ENCODE measurements at regions of chr9 and their contacts with region 1.

Region 1: GRCh38 chr9:21434202-21435014 is 5.8 kb upstream of the IFNA1 start:
- DNase-seq: peak; percentile 63
- ATAC-seq: peak; percentile 79
- H3K4me3 ChIP-seq: no peak overlapping the region
- H3K27ac ChIP-seq: no peak overlapping the region
- H3K4me1 ChIP-seq: no peaks in the 10 kb centered on the region
- H3K27me3 ChIP-seq: no peaks in the 10 kb centered on the region
- CTCF ChIP-seq: peak; percentile 58 to 71 (median 66); a peak in 5 of 6 replicates
- POLR2A ChIP-seq: no peak
- RAD21 ChIP-seq: peak; percentile 55

Region 2: GRCh38 chr9:21144603-21145002 is 289.8 kb before region 1 on chr9:
- CTCF ChIA-PET with region 1: no interaction called
- POLR2A ChIA-PET with region 1: no interaction called
- RAD21 ChIA-PET with region 1: no interaction called
- intact Hi-C with region 1: no loop called
- DNase-seq: no peak
- ATAC-seq: no peak
- H3K4me3 ChIP-seq: no peak overlapping the region
- H3K27ac ChIP-seq: no peak overlapping the region
- H3K4me1 ChIP-seq: no peaks in the 10 kb centered on the region
- H3K27me3 ChIP-seq: no peaks in the 10 kb centered on the region
- CTCF ChIP-seq: no peak
- POLR2A ChIP-seq: no peak
- RAD21 ChIP-seq: no peak

Region 3: GRCh38 chr9:21252721-21253547 is 181.5 kb before region 1 on chr9:
- CTCF ChIA-PET with region 1: interaction called, 17 read pairs
- POLR2A ChIA-PET with region 1: no interaction called
- RAD21 ChIA-PET with region 1: no interaction called
- intact Hi-C with region 1: no loop called
- DNase-seq: peak; percentile 38
- ATAC-seq: peak; percentile 93
- H3K4me3 ChIP-seq: peak overlapping the region; percentile 23 to 45; a peak in 3 of 4 replicates
- H3K27ac ChIP-seq: no peak overlapping the region
- H3K4me1 ChIP-seq: peaks cover 0 to 4% of the 10 kb centered on the region in 2 experiments; a peak in 1 of 4 replicates
- H3K27me3 ChIP-seq: no peaks in the 10 kb centered on the region
- CTCF ChIP-seq: peak; percentile 67 to 80 (median 72)
- POLR2A ChIP-seq: no peak
- RAD21 ChIP-seq: peak; percentile 77

Region 4: GRCh38 chr9:21326526-21327139 is 107.8 kb before region 1 on chr9:
- CTCF ChIA-PET with region 1: interaction called, 15 read pairs
- POLR2A ChIA-PET with region 1: no interaction called
- RAD21 ChIA-PET with region 1: no interaction called
- intact Hi-C with region 1: loop called (anchors 5 kb)
- DNase-seq: no peak
- ATAC-seq: peak; percentile 80
- H3K4me3 ChIP-seq: no peak overlapping the region
- H3K27ac ChIP-seq: no peak overlapping the region
- H3K4me1 ChIP-seq: no peaks in the 10 kb centered on the region
- H3K27me3 ChIP-seq: no peaks in the 10 kb centered on the region
- CTCF ChIP-seq: peak; percentile 51 to 81 (median 69); a peak in 5 of 6 replicates
- POLR2A ChIP-seq: no peak
- RAD21 ChIP-seq: peak; percentile 79

Region 5: GRCh38 chr9:21395778-21396717 is 38.4 kb before region 1 on chr9:
- CTCF ChIA-PET with region 1: interaction called, 16 read pairs
- POLR2A ChIA-PET with region 1: no interaction called
- RAD21 ChIA-PET with region 1: no interaction called
- intact Hi-C with region 1: no loop called
- DNase-seq: peak; percentile 21
- ATAC-seq: peak; percentile 84
- H3K4me3 ChIP-seq: peak overlapping the region; percentile 63 to 67
- H3K27ac ChIP-seq: no peak overlapping the region
- H3K4me1 ChIP-seq: peaks cover 0 to 7% of the 10 kb centered on the region in 2 experiments; a peak in 1 of 4 replicates
- H3K27me3 ChIP-seq: no peaks in the 10 kb centered on the region
- CTCF ChIP-seq: peak; percentile 76 to 94 (median 92)
- POLR2A ChIP-seq: no peak
- RAD21 ChIP-seq: peak; percentile 50

Region 6: GRCh38 chr9:21455320-21455719 is 20.9 kb after region 1 on chr9:
- CTCF ChIA-PET with region 1: interaction called, 10 read pairs
- POLR2A ChIA-PET with region 1: no interaction called
- RAD21 ChIA-PET with region 1: interaction called in 1 of 2 experiments, 3 read pairs
- intact Hi-C with region 1: no loop called
- DNase-seq: peak; percentile 23
- ATAC-seq: peak; percentile 99
- H3K4me3 ChIP-seq: no peak overlapping the region
- H3K27ac ChIP-seq: no peak overlapping the region
- H3K4me1 ChIP-seq: no peaks in the 10 kb centered on the region
- H3K27me3 ChIP-seq: no peaks in the 10 kb centered on the region
- CTCF ChIP-seq: peak; percentile 69 to 84 (median 77); a peak in 5 of 6 replicates
- POLR2A ChIP-seq: no peak
- RAD21 ChIP-seq: peak; percentile 81